ENCODE measurements at regions of chr22 and their contacts with region 1.

Region 1: DNA sequence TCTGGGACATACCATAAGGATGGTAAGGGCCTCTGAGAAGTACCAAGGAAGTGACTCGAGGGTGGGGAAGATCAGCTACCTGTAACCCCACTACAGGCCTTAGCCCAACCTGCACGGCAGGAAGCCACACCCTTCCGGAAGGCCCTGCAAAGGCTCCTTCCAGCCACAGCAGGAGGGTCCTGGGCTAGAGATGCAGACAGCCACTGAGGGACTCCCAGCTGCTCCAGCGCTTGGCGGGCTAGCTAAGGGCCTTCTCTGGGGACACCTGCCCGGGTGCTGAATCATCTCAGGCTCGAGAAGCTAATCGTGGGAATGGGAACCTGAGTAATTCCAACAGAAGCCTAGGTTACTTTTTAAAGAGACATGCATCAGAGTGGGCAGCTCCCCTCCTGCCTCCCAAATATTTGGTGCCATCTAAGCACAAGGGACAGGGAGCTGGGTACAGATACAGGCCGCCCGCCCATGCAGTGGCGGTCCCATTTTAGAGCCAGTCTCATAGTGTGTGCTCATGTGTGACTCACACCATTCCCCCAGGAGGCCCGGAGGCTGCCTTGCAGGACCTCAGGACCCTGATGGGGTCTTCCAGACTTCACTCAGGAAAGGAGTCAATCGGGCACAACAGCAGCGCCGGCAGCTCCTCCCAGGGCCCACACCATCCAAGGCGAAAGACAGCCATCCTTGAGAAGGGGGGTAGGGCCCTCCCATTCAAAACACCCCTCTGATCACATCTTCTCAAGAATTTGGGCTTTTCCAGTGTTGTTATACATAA is 8.0 kb downstream of the MYH9 start:
- DNase-seq: no peak
- CTCF ChIP-seq: no peak

Region 2: DNA sequence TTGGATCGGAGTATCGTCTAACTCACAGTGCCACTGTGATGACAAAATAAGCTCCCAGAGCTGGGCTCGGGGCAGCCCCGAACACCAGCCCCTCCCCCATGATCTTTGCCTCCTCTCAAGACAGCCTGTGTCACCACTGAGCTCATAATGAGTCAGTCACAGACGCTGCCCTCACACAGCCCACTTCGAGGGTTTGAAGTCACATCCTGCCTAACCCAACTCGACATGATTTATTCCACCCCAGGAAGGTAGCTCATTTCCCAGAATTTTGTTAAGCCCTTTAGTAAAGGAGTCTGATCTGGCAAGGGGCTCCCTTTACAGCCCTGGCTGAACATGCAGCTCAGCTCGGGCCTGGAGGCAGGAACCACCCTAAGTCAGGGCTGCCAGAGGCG is 14.8 kb before region 1 on chr22:
- CTCF ChIA-PET with region 1: interaction called, 11 read pairs
- POLR2A ChIA-PET with region 1: interaction called, 15 read pairs
- DNase-seq: peak; percentile 77
- CTCF ChIP-seq: no peak